GM23248 (cell line): ENCODE measurements at regions of chr3 and their contacts with region 1.

Region 1: GRCh38 chr3:160707187-160707794 is 30.3 kb downstream of the ARL14 start:
- DNase-seq: peak; percentile 67
- H3K4me3 ChIP-seq: no peak overlapping the region
- H3K27ac ChIP-seq: no peak overlapping the region
- H3K4me1 ChIP-seq: peaks cover 7% of the 10 kb centered on the region; the same call in 1 of the 2 replicates
- H3K27me3 ChIP-seq: peaks cover 17% of the 10 kb centered on the region

Region 2: DNA sequence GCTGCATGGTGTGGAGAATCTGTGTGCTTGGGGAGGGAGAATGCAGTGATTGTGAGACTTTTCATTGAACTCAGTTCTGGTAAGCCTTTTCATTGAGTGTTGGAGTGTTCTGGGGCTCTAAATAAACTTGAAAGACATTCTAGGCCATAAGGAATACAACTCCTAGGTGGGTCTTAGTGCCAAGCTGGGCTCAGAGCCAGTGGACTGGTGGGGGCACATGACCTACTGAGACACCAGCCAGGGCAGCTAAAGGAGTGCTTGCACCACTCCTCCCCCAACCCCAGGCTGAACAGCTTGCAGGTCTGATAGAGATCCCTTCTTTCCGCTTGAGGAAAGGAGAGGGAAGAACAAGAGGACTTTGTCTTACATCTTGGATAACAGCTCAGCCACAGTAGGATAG is 120.2 kb before region 1 on chr3:
- in situ Hi-C with region 1: no loop called
- DNase-seq: no peak
- H3K4me3 ChIP-seq: no peak overlapping the region
- H3K27ac ChIP-seq: no peak overlapping the region
- H3K4me1 ChIP-seq: no peaks in the 10 kb centered on the region
- H3K27me3 ChIP-seq: no peaks in the 10 kb centered on the region

Region 3: GRCh38 chr3:160931474-160931873 is 224.2 kb after region 1 on chr3:
- in situ Hi-C with region 1: loop called (anchors 10 kb)
- DNase-seq: peak; percentile 69
- H3K4me3 ChIP-seq: no peak overlapping the region
- H3K27ac ChIP-seq: no peak overlapping the region
- H3K4me1 ChIP-seq: peaks cover 19% of the 10 kb centered on the region
- H3K27me3 ChIP-seq: no peaks in the 10 kb centered on the region